ENCODE measurements at regions of chr3 and their contacts with region 1.

Region 1: DNA sequence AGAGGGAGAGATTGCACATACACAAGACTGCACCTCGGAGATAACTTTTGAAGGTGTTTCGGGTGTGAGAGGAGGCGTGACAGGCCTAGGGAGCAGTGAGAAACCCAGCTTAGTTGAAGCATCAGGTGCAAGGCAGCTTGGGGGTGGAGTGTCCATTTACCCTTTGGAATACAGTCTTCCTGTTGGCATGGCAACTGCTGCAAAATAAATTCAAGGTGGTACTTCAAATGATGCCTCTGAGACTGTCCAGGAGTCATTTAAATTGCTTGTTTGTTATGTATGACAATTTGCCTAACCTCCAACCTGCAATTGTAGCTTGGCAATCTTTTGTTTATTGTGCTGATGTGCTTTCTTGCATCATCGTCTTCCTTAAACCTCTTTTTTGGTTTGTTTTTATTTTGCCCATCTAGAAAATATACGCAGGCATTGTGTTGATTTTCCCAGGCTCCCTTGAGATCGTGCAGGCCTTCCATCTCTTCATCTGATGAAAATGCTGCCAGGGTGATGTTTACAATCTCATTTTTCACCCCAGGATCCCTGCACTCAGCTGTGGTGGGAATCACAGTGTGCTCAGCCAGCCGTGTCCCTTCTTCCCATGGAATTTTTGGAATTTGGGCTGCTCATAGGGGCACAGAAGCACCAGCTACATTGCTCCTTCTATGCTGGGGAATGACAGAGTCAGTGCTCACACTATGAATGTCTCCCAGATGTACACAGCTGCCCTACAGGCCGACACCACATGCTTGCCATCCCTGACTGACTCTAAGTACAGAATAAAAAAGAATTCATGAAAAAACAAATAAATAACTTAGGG is 583.1 kb upstream of the CFAP20DC start:
- DNase-seq: no peak

Region 2: GRCh38 chr3:59692117-59692516 is 59.1 kb after region 1 on chr3:
- intact Hi-C with region 1: loop called (anchors 5 kb)
- DNase-seq: no peak